ENCODE measurements at regions of chr7 and their contacts with region 1.

Region 1: DNA sequence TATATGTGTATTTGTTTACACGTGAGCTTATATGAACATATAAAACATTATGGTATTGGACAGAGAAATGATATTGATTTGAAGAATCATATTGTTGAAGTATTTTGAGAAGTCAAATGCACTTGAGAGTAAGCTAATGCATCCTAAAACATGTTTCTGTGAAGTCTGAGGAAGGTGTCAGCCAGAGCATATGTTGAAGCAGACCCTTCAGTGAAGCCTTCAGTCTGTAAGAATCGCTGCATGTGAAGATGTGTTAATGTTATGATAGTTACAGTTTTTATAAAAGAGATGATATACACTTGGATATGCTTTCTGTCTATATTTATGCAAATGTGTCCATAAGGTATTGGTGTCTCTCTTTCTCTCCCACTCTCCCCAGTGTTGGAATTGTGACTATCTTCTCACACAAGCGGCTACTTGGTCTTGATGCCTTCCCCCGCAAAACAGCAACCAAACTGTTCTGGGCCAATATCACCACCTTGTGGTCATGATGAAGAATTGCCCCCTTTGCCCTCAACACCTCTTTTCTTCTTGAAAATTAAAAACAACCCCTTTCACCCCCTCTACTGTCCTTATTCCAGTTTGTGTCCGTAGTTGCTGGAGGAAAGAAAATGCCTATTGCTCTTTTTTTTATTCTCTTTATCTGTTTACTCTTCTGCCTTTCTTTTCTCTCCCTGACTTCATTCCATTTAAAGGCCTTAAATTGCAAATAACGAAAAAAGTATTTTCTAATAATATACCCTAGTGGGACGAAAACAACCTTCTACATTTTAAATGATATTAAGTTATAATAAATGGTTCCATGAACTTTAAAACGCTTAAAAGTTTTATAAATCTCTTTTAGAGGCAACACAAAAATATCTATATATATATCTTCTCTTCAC is 64.9 kb downstream of the IKZF1 start:
- DNase-seq: no peak
- H3K4me3 ChIP-seq: no peak overlapping the region
- H3K27ac ChIP-seq: no peak overlapping the region
- H3K4me1 ChIP-seq: no peaks in the 10 kb centered on the region
- H3K27me3 ChIP-seq: no peaks in the 10 kb centered on the region
- CTCF ChIP-seq: peak; percentile 49 to 91 (median 84)
- EP300 ChIP-seq: no peak
- POLR2A ChIP-seq: no peak
- RAD21 ChIP-seq: peak; percentile 96

Region 2: GRCh38 chr7:50092579-50093491 is 276.6 kb before region 1 on chr7 and contains the start of gene ZPBP:
- CTCF ChIA-PET with region 1: interaction called, 14 read pairs
- POLR2A ChIA-PET with region 1: no interaction called
- DNase-seq: peak in 1 of 2 experiments; percentile 51
- H3K4me3 ChIP-seq: peak within 1 kb of the TSS; percentile 10 to 52 (median 24); a peak in 4 of 8 replicates
- H3K27ac ChIP-seq: no peak within 1 kb of the TSS
- H3K4me1 ChIP-seq: peaks cover 0 to 3% (median 2%) of the 10 kb centered on the region in 4 experiments; a peak in 2 of 7 replicates
- H3K27me3 ChIP-seq: no peaks in the 10 kb centered on the region
- CTCF ChIP-seq: peak in 2 of 3 experiments; percentile 66 to 68; a peak in 3 of 4 replicates
- EP300 ChIP-seq: no peak
- POLR2A ChIP-seq: no peak
- RAD21 ChIP-seq: peak; percentile 84 to 85
- total RNA-seq, gene ZPBP: not detected in 2 replicates

Region 3: DNA sequence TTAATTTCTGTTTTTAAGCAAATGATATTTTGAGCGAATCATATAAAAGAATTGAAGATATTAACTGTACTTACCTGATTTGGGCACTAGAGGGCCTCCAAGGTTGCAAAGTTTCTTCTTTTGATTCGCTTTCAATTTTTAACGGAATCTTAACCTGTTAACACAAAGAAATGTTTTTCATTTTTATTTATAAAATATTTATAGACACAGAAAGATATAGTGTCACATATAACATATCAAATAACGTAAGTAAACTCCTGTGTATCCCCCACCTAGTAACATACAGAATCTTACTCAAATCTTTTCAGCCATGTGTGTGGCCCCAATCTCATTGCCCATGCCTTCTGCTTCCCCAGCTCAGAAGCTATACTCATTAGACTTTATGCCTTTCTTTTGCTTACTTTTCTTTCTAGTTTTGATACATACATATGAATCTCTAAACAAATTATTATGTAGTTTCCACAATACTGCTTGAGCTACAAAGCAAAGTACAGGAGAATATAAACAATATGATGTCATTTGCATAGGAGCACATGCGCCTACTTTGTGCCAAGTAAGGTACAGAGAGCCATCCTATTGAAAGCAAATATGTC is 226.9 kb before region 1 on chr7:
- CTCF ChIA-PET with region 1: interaction called, 13 read pairs
- POLR2A ChIA-PET with region 1: no interaction called
- DNase-seq: no peak
- H3K4me3 ChIP-seq: no peak overlapping the region
- H3K27ac ChIP-seq: no peak overlapping the region
- H3K4me1 ChIP-seq: no peaks in the 10 kb centered on the region
- H3K27me3 ChIP-seq: no peaks in the 10 kb centered on the region
- CTCF ChIP-seq: peak in 1 of 3 experiments; percentile 48; a peak in 2 of 4 replicates
- EP300 ChIP-seq: no peak
- POLR2A ChIP-seq: no peak
- RAD21 ChIP-seq: peak; percentile 57 to 58

Region 4: GRCh38 chr7:50149369-50149768 is 220.0 kb before region 1 on chr7:
- CTCF ChIA-PET with region 1: interaction called, 11 read pairs
- POLR2A ChIA-PET with region 1: no interaction called
- DNase-seq: no peak
- H3K4me3 ChIP-seq: no peak overlapping the region
- H3K27ac ChIP-seq: no peak overlapping the region
- H3K4me1 ChIP-seq: no peaks in the 10 kb centered on the region
- H3K27me3 ChIP-seq: no peaks in the 10 kb centered on the region
- CTCF ChIP-seq: no peak
- EP300 ChIP-seq: no peak
- POLR2A ChIP-seq: no peak
- RAD21 ChIP-seq: no peak

Region 5: DNA sequence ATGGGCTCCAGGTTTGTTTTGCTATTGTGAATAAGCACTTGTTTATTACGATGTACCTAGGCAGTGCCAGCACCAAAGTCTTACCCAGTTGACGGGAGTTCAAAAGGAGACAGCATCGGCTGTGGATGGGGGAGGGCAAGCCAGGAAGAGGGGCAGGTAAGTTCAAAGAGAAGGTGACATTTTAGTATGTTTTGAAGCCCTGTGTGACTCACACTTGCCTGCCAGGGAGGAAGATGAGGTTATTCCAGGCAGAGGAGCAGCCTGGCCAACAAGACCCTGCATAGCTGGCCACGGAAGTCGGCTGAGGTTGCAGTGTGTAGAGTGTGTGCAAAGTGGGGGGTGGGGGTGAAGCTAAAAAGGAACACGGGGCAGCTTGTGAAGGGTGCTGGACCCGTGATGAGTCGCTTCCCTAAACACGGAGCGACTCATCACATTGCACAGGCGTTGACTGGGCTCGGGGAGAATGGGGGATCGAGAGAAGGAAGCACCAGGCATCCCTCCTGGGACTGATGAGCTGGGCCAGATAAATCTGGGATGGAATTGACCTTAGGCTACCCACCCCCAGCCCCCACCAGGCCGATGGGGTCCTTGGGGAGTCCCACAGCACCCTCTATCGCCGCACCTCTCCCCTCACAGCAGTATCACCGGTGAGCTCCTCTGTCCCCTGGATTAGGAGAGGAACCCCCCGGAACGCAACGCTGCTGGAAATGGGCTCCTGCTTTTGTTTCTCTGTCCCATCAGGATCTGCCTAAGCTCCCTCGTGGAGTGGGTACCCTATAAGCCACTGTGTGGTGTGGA is 162.7 kb before region 1 on chr7:
- CTCF ChIA-PET with region 1: interaction called, 99 read pairs
- POLR2A ChIA-PET with region 1: no interaction called
- DNase-seq: no peak
- H3K4me3 ChIP-seq: no peak overlapping the region
- H3K27ac ChIP-seq: no peak overlapping the region
- H3K4me1 ChIP-seq: no peaks in the 10 kb centered on the region
- H3K27me3 ChIP-seq: no peaks in the 10 kb centered on the region; a peak in 1 of 7 replicates
- CTCF ChIP-seq: no peak
- EP300 ChIP-seq: no peak
- POLR2A ChIP-seq: no peak
- RAD21 ChIP-seq: no peak

Measured in H1 (cell line).